PC-9 (cell line): ENCODE measurements at regions of chr2 and their contacts with region 1.

Region 1: DNA sequence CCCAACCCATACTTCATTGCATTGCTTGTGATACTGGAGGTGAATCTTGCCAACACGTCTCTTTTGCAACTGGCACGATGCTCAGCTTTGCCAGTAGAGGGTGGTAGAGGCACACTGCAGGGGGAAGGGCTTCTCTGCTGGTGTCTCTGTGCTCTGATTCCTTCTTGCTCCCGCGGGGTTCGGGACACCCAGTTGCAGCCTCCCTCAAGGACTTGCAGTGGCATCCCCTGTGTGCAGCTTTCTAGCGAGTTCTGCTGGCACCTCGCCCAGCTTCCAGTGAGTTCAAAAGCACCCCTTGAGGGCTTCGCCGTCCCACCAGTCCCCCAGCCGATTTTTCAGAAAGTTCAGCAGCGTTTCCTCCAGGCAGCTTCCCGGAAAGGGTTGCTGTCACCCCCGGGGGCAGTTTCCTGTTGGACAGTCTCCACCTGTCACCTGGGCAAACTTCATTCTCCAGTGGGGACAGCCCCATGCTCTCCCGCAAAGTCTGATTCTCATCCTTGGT is 35.3 kb upstream of the EN1 start:
- DNase-seq: peak; percentile 51 to 75
- H3K4me3 ChIP-seq: no peak overlapping the region
- H3K27ac ChIP-seq: no peak overlapping the region
- H3K4me1 ChIP-seq: peaks cover 40% of the 10 kb centered on the region
- H3K27me3 ChIP-seq: no peaks in the 10 kb centered on the region
- CTCF ChIP-seq: peak; percentile 99

Region 2: DNA sequence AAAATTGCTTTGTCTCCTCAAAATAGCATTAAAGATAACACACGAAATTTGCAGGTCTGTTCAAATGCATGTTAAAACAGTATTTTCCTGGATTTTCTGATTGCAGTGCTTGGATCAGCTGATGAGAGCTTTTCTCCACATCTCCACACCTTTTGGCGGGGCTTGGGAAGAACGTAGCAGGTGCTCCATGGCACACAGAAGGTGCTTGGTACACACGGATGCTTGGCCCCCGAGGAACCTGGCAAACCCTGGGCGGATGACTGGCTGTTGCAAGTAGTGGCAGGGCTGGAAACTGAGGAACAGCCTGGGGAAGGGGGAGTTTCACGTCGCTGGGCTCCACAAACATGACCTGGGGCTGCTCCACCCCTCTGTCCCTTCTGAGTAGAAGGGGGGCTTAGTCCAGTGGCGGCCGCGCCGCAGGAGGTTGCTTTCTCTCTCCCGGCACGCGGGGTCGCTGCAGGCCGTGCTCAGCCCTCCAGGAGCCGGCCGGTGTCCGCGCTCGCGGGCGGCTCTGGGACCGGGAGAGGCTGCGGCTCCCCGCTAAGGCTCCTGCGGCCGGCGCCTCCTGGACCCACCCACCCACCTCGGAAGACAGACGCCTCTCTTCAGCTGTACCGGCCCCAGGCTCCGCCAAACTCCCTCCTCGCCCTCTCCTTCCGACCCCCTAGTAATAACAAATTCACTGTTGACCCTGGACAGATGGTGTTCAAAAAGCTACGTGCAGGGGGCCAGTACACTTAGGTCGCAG is 128.6 kb after region 1 on chr2:
- CTCF ChIA-PET with region 1: interaction called, 3 read pairs
- POLR2A ChIA-PET with region 1: no interaction called
- intact Hi-C with region 1: loop called (anchors 10 kb)
- DNase-seq: peak in 1 of 2 experiments; percentile 51
- H3K4me3 ChIP-seq: peak overlapping the region; percentile 13; the same call in 1 of the 2 replicates
- H3K27ac ChIP-seq: no peak overlapping the region
- H3K4me1 ChIP-seq: no peaks in the 10 kb centered on the region
- H3K27me3 ChIP-seq: no peaks in the 10 kb centered on the region
- CTCF ChIP-seq: peak; percentile 79

Region 3: GRCh38 chr2:119179202-119179601 is 296.4 kb after region 1 on chr2:
- CTCF ChIA-PET with region 1: no interaction called
- POLR2A ChIA-PET with region 1: no interaction called
- intact Hi-C with region 1: no loop called
- DNase-seq: peak; percentile 64 to 68
- H3K4me3 ChIP-seq: no peak overlapping the region
- H3K27ac ChIP-seq: peak overlapping the region; percentile 9; the same call in 1 of the 2 replicates
- H3K4me1 ChIP-seq: peaks cover 21% of the 10 kb centered on the region
- H3K27me3 ChIP-seq: no peaks in the 10 kb centered on the region
- CTCF ChIP-seq: no peak

Region 4: DNA sequence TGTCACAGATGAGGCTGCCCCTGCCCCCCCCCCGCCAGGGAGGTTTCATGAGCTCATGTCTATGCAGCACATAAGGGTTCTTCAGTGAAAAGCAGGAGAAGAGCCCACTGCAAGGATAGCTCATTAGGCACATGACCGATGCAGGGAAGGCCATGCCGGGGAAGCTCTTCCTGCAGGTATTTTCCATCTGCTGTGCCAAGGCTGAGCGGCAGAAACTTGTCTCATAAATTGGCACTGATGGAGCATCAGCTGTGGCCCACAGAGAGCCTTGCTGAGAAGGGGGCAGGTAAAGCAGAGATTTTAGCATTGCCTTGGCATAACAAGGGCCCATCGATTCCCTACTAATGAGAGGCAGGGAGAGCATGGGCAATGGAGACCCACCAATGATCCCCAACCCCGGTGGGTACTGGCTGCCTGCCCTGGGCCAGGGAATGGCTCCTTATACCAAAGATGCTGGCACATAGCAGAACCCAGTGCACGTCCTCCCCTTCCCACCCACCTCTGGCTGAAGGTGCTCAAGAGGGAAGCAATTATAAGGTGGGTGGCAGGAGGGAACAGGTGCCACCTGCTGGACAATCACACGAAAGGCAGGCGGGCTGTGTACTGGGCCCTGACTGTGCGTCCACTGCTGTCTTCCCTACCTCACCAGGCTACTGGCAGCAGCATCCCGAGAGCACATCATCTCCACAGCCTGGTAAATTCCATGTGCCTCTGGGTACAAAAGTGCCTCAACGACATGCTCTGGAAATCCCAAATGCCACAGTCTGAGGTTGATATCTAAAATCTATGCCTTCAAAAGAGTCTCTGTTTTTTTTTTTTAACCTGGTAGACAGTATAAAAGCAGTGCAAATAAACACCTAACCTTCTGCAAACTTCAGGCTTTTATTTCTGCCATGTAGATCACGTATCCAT is 382.3 kb after region 1 on chr2:
- CTCF ChIA-PET with region 1: no interaction called
- POLR2A ChIA-PET with region 1: no interaction called
- intact Hi-C with region 1: loop called (anchors 1 kb)
- DNase-seq: peak in 1 of 2 experiments; percentile 67
- H3K4me3 ChIP-seq: no peak overlapping the region
- H3K27ac ChIP-seq: no peak overlapping the region
- H3K4me1 ChIP-seq: no peaks in the 10 kb centered on the region
- H3K27me3 ChIP-seq: no peaks in the 10 kb centered on the region
- CTCF ChIP-seq: peak; percentile 95

Region 5: GRCh38 chr2:119305497-119306195 is 422.9 kb after region 1 on chr2:
- CTCF ChIA-PET with region 1: interaction called, 5 read pairs
- POLR2A ChIA-PET with region 1: no interaction called
- intact Hi-C with region 1: loop called (anchors 5 kb)
- DNase-seq: no peak
- H3K4me3 ChIP-seq: no peak overlapping the region
- H3K27ac ChIP-seq: no peak overlapping the region
- H3K4me1 ChIP-seq: no peaks in the 10 kb centered on the region
- H3K27me3 ChIP-seq: no peaks in the 10 kb centered on the region
- CTCF ChIP-seq: no peak

Region 6: DNA sequence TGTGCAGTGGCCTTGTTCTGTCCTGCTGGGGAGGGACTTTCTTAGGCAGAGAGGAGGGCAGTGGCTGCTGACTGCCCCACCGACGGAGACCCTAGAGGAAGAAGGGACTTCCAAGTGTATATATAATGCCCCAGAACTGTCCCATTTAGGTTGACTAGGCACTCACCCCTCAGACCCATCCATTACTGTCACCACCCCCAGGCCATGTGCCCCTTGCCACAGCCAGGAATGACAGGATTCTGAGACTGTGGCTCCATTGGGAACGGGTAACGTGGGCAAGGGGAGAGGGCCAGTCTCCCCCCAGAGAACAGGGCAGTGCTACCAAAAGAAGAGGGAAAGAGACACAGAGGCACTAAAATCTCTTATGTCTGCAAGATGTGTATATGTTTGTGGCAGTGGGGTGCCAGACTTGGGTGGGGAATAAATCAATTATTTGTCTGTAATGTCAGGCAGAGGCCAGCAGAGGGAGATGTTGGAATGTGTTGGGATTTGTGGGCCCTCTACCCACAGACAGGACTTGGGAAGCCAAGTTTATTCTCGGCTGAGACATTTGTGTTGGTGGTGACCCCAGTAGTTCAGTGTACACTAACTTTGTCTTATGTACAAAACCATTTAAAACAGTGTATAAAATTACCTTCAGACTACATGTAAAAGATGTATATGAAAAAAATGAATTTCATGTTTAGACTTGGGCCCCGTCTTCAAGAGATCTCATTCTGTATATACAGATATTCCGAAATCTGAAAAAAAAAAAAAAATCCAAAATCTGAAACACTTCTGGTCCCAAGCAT is 524.9 kb after region 1 on chr2:
- CTCF ChIA-PET with region 1: no interaction called
- POLR2A ChIA-PET with region 1: no interaction called
- intact Hi-C with region 1: loop called (anchors 5 kb)
- DNase-seq: peak; percentile 44 to 57
- H3K4me3 ChIP-seq: no peak overlapping the region
- H3K27ac ChIP-seq: no peak overlapping the region
- H3K4me1 ChIP-seq: peaks cover 5% of the 10 kb centered on the region; the same call in 1 of the 2 replicates
- H3K27me3 ChIP-seq: no peaks in the 10 kb centered on the region
- CTCF ChIP-seq: peak; percentile 98

Region 7: DNA sequence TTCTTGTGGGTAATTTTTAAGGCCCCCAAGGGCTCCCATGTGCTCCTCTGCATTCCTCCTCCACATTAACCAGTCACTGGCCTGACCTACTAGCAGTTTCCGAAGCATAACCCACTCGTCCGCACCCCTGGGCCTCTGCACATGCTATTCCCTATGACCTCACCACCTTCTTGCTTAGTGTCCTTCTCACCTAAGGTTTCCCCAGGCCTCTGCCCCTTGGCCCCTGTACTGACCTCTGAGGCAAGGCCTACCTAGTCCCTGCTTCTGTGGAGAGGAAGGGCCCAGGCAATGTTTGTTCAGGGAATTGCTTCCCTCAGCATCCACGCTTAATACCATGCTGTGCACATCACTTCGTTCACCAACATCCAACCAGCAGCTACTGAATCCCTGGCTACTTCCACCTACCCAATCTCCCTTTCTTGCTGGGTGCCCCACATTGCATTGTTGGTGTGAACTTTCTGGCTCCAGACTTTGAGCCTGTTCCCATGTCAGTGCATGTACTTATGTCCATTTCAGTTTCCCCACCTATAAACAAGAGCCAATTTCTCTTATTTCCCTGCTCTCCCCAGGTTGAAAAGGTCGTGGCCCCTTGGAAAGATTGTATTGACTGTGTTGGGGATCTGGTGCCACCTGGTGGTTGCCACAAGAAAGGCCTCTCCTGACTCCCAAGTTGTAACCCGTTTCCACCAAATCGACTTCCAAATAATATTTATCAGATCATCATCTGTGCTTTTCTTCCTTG is 777.0 kb after region 1 on chr2:
- CTCF ChIA-PET with region 1: no interaction called
- POLR2A ChIA-PET with region 1: no interaction called
- intact Hi-C with region 1: loop called (anchors 2 kb)
- DNase-seq: peak in 1 of 2 experiments; percentile 40
- H3K4me3 ChIP-seq: no peak overlapping the region
- H3K27ac ChIP-seq: no peak overlapping the region
- H3K4me1 ChIP-seq: no peaks in the 10 kb centered on the region
- H3K27me3 ChIP-seq: 0 out of 2 replicates have a peak, but pooled peaks cover 3% of the 10 kb centered on the region
- CTCF ChIP-seq: peak; percentile 96

Region 8: DNA sequence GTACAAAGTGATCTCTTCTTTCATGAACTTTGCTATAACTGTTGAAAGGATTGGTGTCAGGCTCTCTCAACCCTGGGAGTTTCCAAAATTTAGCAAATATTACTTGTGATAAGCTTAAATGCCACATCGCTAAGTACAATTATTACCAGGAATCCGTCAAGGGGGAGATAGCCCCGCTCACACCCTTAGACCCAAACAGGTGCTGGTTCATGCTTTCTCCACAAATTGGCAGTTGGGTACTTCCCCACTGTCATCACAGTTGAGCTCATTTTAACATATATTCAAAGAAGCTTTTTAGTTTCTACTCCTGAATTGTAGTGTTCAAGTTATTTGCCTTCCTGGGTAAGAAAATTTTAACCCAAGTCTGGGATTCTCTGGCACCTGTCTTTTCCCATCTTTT is 1100.3 kb after region 1 on chr2:
- CTCF ChIA-PET with region 1: interaction called, 11 read pairs
- POLR2A ChIA-PET with region 1: no interaction called
- intact Hi-C with region 1: no loop called
- DNase-seq: no peak
- H3K4me3 ChIP-seq: no peak overlapping the region
- H3K27ac ChIP-seq: no peak overlapping the region
- H3K4me1 ChIP-seq: no peaks in the 10 kb centered on the region
- H3K27me3 ChIP-seq: no peaks in the 10 kb centered on the region
- CTCF ChIP-seq: no peak